Left cardiac atrium (tissue), 4 donors: ENCODE measurements at regions of chr11 and their contacts with region 1.

Region 1: DNA sequence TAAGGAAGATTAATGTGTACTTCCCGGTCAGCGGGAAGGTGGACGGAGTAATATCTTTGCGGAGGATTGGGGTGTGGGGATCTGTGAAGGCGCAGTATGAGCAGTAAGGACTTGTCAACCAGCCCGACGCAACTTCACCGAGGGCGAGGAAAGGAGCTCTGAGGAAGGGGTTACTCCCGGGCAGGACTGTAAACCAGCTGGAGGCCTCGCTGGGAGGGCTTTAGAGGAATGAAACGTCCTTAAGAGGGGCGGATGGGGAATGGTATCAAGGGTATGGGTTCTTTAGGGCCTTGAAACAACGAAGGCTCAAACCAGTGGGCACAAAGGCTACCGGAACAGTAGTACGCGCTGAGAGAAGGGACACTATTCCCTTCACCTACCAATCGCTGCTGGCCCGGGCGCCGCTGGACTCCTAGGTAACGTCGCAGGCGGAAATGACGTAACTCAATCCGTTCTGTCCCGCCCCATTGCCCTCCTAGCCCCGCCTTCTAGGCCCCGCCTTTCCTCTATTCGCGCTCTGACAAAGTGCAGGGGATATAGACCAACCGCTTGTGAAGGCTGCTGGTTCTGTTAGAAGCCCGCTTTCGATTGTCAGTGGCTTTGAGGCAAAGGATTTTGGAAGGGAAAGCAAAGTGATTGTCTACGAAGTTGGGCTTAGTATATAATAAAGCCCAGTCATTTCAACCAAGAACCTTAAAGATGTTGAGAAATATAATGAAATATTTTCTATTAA is at the start of gene C11orf65:
- DNase-seq: peak; percentile 97
- ATAC-seq: peak; percentile 100
- total RNA-seq, gene C11orf65: 0.18 to 0.94 TPM

Region 2: DNA sequence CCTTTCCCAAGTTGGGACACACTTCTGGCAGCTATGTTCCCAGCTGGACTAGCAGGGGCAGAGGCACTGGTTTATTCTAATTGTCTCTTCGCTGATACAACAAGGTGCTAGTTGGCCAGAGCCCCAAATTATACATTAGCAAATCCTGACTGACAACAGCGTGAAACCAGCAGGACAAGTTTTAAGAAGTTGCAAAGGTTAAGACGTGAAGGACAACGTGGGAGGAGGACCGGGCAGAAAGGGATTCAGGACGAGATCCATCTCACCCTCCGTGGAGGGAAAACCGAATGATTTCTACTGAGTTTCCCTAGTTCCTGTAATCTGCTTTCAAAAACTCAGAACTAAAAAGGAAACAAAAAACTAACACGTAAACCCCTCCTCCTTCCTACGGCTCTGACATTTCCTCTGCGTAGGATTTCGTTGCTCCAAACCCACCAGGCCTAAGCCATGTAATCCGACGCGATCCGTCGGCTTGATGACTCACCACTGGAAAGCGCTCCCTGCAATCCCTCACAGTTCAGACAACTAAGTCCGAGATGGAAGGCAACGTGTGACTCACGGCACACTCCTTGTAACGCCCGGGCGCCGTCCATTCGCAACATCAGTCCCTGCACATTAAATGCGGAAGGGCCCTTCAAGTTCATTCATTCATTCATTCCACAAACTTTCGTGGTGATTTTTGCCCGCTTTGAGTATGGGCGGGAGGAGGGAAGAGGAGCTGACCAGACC is 30.2 kb after region 1 on chr11:
- intact Hi-C with region 1: loop called in 1 of 2 experiments (anchors 2 kb)
- DNase-seq: peak; percentile 92
- ATAC-seq: peak; percentile 95 to 98

Region 3: GRCh38 chr11:108601150-108601549 is 133.9 kb after region 1 on chr11:
- intact Hi-C with region 1: no loop called
- DNase-seq: no peak
- ATAC-seq: no peak

Region 4: DNA sequence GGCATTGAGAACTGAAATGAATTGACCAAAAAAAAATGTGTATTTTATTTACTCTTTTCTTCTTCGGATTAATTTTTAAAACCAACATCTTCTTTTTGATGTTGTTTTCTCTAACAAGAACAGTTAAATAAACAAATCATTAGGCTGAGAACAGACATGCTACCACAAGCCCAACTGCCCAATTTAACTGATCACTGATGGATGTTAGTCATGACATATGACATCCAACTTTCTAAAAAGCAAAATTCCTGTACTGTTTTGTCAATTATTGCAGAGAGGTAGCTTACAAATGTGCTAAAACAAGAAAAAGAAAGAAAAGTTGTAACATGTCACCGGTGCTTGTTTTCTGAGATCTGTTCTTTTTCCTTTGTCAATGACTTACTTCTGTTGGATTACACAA is 1186.8 kb after region 1 on chr11:
- intact Hi-C with region 1: no loop called
- DNase-seq: no peak
- ATAC-seq: no peak